ENCODE measurements at regions of chr2 and their contacts with region 1.

Region 1: DNA sequence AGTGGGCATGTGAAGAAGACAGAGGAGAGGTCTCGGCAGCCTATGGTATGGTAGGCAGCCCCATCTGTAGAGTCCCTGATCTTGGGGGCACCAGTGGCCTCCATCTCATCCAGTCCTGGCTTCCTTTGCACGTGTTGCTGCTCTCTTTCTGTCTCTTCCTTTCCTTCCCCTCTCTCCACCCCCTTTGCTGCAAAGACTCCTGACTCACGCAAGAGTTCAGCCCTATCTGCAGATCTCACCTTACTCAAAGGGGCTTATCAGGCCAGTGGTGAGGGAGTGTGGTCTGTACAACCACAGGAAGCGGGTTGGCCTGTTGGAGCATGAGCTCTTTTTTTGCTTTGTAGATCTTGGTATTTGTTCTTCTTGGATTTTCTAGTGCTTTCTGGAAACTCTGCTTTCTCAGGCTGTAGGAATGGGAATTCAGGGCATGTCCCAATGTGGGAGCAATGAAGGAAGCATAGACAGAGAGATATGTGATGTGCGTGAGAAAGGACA is 14.6 kb upstream of the NT5DC4 start:
- DNase-seq: no peak
- H3K4me3 ChIP-seq: no peak overlapping the region
- H3K27ac ChIP-seq: no peak overlapping the region
- H3K4me1 ChIP-seq: no peaks in the 10 kb centered on the region
- H3K27me3 ChIP-seq: peaks cover 0 to 3% of the 10 kb centered on the region in 2 donors
- CTCF ChIP-seq: no peak

Region 2: DNA sequence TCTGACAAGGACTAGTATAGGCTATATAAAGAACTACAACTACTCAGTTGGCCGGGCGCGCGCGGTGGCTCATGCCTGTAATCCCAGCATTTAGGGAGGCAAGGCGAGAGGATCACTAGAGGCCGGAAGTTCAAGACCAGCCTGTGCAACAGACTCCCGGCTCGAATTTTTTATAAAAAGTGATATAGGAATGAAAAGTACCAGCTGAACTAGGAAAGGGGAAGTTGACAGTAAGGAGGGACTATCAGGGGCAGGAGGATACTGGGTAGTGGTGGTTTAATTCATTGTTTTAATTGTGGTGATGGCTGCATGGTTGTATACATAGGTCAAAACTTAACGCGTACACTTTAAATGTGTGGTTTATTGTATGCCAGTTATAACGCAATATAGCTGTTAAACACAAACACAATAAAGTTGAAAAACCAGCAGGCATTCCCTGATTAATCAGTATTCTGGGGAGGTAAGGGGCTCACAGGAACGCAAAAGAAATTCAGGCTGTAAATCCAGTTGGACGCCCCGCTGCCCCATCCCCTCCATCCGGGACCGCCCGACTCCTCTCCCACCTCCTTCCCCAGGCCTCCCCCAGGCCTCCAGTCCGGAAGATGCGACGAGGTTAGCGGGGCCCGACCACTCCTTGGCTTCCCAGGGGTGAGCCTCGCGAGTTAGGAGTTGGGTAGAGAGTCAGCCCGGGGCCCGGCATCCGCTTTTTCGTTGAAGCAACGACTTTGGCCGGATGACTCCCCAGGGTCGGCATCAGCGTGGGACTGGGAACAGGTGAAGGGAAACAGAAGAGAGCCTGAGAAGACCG is 164.7 kb before region 1 on chr2:
- intact Hi-C with region 1: no loop called
- DNase-seq: peak in 1 of 2 donors; percentile 82
- H3K4me3 ChIP-seq: peak overlapping the region; percentile 76 to 81
- H3K27ac ChIP-seq: peak overlapping the region; percentile 81 to 88
- H3K4me1 ChIP-seq: peaks cover 0 to 17% (median 11%) of the 10 kb centered on the region in 4 donors
- H3K27me3 ChIP-seq: no peaks in the 10 kb centered on the region
- CTCF ChIP-seq: no peak

Region 3: DNA sequence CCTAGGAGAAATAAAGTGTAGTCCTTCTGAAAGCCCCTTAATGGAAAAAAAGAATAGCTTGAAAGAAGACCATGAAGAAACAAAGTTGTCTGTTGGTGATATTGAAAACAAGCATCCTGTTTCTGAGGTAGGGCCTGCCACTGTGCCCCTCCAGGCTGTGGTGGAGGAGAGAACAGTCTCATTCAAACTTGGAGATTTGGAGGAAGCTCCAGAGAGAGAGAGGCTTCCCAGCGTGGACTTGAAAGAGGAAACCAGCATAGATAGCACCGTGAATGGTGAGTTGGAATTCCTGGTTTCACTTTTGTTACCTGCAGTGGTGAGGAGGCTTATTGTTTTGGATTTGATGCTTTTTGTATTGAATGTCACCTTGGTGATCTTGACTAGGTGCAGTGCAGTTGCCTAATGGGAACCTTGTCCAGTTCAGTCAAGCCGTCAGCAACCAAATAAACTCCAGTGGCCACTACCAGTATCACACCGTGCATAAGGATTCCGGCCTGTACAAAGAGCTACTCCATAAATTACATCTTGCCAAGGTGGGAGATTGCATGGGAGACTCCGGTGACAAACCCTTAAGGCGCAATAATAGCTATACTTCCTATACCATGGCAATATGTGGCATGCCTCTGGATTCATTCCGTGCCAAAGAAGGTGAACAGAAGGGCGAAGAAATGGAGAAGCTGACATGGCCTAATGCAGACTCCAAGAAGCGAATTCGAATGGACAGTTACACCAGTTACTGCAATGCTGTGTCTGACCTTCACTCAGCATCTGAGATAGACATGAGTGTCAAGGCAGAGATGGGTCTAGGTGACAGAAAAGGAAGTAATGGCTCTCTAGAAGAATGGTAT is 47.2 kb before region 1 on chr2:
- intact Hi-C with region 1: loop called (anchors 1 kb)
- DNase-seq: no peak
- H3K4me3 ChIP-seq: no peak overlapping the region
- H3K27ac ChIP-seq: no peak overlapping the region
- H3K4me1 ChIP-seq: peaks cover 0 to 2% (median 0%) of the 10 kb centered on the region in 4 donors
- H3K27me3 ChIP-seq: no peaks in the 10 kb centered on the region
- CTCF ChIP-seq: no peak

Region 4: DNA sequence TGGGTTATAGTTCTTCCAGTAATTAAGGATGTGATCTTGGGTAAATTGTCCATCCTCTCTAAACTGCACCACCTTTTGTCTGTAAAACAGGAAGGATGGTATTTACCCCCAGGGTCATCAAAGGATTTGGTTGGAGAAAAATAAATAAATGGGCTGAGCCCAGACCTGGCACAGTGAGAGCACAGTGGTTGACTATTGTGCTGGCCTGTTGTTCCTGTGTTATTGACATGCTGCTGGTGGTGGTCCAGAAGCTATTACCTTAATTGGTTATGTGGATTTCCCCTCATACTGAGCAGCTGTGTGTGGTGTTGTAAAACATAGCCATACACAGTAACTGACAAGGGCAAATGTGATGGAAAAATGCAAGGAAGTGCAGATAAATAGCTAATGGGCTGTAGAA is 204.0 kb after region 1 on chr2:
- intact Hi-C with region 1: no loop called
- DNase-seq: no peak
- H3K4me3 ChIP-seq: no peak overlapping the region
- H3K27ac ChIP-seq: no peak overlapping the region
- H3K4me1 ChIP-seq: no peaks in the 10 kb centered on the region
- H3K27me3 ChIP-seq: no peaks in the 10 kb centered on the region
- CTCF ChIP-seq: no peak

Region 5: GRCh38 chr2:113351375-113352355 is 645.4 kb after region 1 on chr2:
- intact Hi-C with region 1: no loop called
- DNase-seq: no peak
- H3K4me3 ChIP-seq: no peak overlapping the region
- H3K27ac ChIP-seq: no peak overlapping the region
- H3K4me1 ChIP-seq: no peaks in the 10 kb centered on the region
- H3K27me3 ChIP-seq: peaks cover 0 to 8% of the 10 kb centered on the region in 2 donors
- CTCF ChIP-seq: no peak